ENCODE measurements at regions of chr2 and their contacts with region 1.

Region 1: GRCh38 chr2:125796784-125797183 is 859.2 kb upstream of the GYPC start:
- DNase-seq: no peak
- ATAC-seq: no peak
- H3K4me3 ChIP-seq: no peak overlapping the region
- H3K27ac ChIP-seq: no peak overlapping the region
- H3K4me1 ChIP-seq: no peaks in the 10 kb centered on the region
- H3K27me3 ChIP-seq: no peaks in the 10 kb centered on the region
- CTCF ChIP-seq: no peak

Region 2: DNA sequence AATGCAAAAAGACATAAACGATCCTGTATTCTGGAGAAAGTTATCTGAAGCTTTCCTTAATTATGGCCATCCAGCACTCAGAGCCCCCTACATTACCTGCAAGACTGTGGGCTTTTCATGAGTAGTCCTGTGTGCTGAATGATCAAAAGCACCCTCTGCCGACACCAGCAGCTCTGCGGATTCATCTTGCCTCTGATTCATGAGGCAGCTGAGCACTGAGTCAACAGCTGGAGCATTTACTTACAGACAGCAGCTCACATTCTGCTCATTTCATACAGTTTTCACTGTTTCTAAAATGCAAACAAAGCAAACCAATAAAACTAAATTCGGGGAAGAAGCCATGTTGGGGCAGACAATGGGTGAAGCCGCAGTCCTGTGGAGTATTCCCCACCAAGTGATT is 885.2 kb before region 1 on chr2:
- CTCF ChIA-PET with region 1: no interaction called
- POLR2A ChIA-PET with region 1: no interaction called
- in situ Hi-C with region 1: no loop called
- intact Hi-C with region 1: no loop called
- DNase-seq: no peak
- ATAC-seq: no peak
- H3K4me3 ChIP-seq: no peak overlapping the region
- H3K27ac ChIP-seq: no peak overlapping the region
- H3K4me1 ChIP-seq: no peaks in the 10 kb centered on the region
- H3K27me3 ChIP-seq: no peaks in the 10 kb centered on the region
- CTCF ChIP-seq: no peak

Region 3: DNA sequence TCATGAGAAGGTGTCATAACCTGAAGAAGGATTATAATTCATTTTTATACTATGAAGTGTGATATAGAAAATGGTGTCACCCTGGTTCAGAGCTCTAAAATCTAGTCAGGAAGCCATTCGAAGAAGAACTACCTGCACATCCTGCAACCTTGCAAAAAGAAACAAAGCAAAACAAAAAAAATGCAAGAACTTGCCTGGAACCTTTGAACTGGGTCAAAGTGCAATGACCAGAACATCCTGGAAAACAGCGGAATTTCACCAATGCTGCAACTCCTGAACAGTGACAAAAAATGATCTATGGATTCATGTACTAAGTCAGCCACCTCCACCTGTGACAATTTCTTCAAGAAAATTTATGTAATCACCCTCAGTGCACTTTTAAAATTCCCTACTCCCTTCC is 224.1 kb before region 1 on chr2:
- CTCF ChIA-PET with region 1: no interaction called
- POLR2A ChIA-PET with region 1: no interaction called
- in situ Hi-C with region 1: no loop called
- intact Hi-C with region 1: no loop called
- DNase-seq: no peak
- ATAC-seq: no peak
- H3K4me3 ChIP-seq: no peak overlapping the region
- H3K27ac ChIP-seq: no peak overlapping the region
- H3K4me1 ChIP-seq: no peaks in the 10 kb centered on the region
- H3K27me3 ChIP-seq: no peaks in the 10 kb centered on the region
- CTCF ChIP-seq: no peak

Region 4: DNA sequence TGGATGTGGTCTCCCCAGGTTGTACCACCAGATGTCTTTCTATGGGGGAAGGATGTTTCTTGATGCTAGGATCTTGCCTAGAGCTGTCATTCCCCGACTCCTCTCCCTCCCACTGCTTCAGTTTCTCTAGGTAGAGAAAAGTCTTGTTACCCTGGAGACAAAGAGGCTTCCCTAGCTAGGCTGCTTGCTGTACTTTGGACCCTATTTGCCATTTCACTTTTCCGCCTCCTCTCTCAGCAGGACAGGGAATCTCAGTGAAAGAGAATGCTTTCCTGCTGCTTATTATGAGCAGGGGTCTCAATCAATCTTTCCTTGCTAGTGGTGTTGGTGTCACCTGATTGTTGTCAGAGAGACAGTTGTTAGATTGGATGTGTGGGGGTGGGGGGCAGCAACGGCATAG is 40.3 kb after region 1 on chr2:
- CTCF ChIA-PET with region 1: no interaction called
- POLR2A ChIA-PET with region 1: no interaction called
- in situ Hi-C with region 1: no loop called
- intact Hi-C with region 1: no loop called
- DNase-seq: no peak
- ATAC-seq: no peak
- H3K4me3 ChIP-seq: no peak overlapping the region
- H3K27ac ChIP-seq: no peak overlapping the region
- H3K4me1 ChIP-seq: no peaks in the 10 kb centered on the region
- H3K27me3 ChIP-seq: no peaks in the 10 kb centered on the region
- CTCF ChIP-seq: no peak

Region 5: GRCh38 chr2:126085011-126085795 is 288.4 kb after region 1 on chr2:
- CTCF ChIA-PET with region 1: no interaction called
- POLR2A ChIA-PET with region 1: no interaction called
- in situ Hi-C with region 1: no loop called
- intact Hi-C with region 1: loop called (anchors 5 kb)
- DNase-seq: no peak
- ATAC-seq: no peak
- H3K4me3 ChIP-seq: no peak overlapping the region
- H3K27ac ChIP-seq: no peak overlapping the region
- H3K4me1 ChIP-seq: no peaks in the 10 kb centered on the region
- H3K27me3 ChIP-seq: no peaks in the 10 kb centered on the region
- CTCF ChIP-seq: no peak

Measured in Panc1 (cell line).